ENCODE measurements at regions of chr16 and their contacts with region 1.

Region 1: GRCh38 chr16:4550591-4550990 is 5.5 kb upstream of the C16orf96 start:
- DNase-seq: no peak
- ATAC-seq: no peak
- H3K4me3 Mint-ChIP-seq: no peak overlapping the region
- H3K27ac Mint-ChIP-seq: peak overlapping the region; percentile 92; the same call in 1 of the 2 replicates
- H3K4me1 Mint-ChIP-seq: no peaks in the 10 kb centered on the region
- H3K27me3 Mint-ChIP-seq: peaks cover 10% of the 10 kb centered on the region; the same call in 1 of the 2 replicates
- CTCF ChIP-seq: no peak

Region 2: GRCh38 chr16:4529085-4530060 is 21.2 kb before region 1 on chr16:
- CTCF ChIA-PET with region 1: interaction called, 10 read pairs
- POLR2A ChIA-PET with region 1: no interaction called
- DNase-seq: peak; percentile 71
- ATAC-seq: peak; percentile 70
- H3K4me3 Mint-ChIP-seq: peak overlapping the region; percentile 40
- H3K27ac Mint-ChIP-seq: peak overlapping the region; percentile 98
- H3K4me1 Mint-ChIP-seq: peaks cover 33% of the 10 kb centered on the region
- H3K27me3 Mint-ChIP-seq: no peaks in the 10 kb centered on the region
- CTCF ChIP-seq: no peak

Region 3: DNA sequence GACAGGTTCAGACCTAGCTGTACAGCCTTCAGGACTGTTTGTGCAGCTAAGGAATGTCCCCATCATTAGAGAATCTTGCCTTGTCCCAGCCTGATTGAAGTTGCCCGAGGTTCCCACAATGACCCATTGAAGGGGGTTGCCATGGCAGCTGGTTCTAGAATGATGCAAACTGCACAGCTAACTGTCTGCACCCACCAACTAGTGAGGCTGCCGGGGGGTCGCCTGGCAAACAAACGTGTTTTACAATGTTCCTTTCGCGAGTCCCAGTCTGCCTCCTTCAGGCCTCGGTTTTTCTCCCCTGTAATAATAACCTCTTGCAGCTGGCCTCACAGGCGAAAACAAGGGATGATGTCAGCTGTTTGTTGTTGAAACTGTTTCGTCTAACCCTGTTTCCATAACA is 11.0 kb after region 1 on chr16:
- CTCF ChIA-PET with region 1: interaction called, 20 read pairs
- POLR2A ChIA-PET with region 1: no interaction called
- DNase-seq: no peak
- ATAC-seq: no peak
- H3K4me3 Mint-ChIP-seq: no peak overlapping the region
- H3K27ac Mint-ChIP-seq: no peak overlapping the region
- H3K4me1 Mint-ChIP-seq: no peaks in the 10 kb centered on the region
- H3K27me3 Mint-ChIP-seq: peaks cover 5% of the 10 kb centered on the region; the same call in 1 of the 2 replicates
- CTCF ChIP-seq: no peak

Region 4: GRCh38 chr16:4593069-4593468 is 42.5 kb after region 1 on chr16:
- CTCF ChIA-PET with region 1: interaction called, 14 read pairs
- POLR2A ChIA-PET with region 1: no interaction called
- DNase-seq: peak; percentile 58
- ATAC-seq: peak; percentile 64
- H3K4me3 Mint-ChIP-seq: no peak overlapping the region
- H3K27ac Mint-ChIP-seq: peak overlapping the region; percentile 68; the same call in 1 of the 2 replicates
- H3K4me1 Mint-ChIP-seq: peaks cover 19% of the 10 kb centered on the region
- H3K27me3 Mint-ChIP-seq: peaks cover 1% of the 10 kb centered on the region; the same call in 1 of the 2 replicates
- CTCF ChIP-seq: no peak

Region 5: GRCh38 chr16:4624015-4624826 is 73.6 kb after region 1 on chr16 and contains the start of gene MGRN1:
- CTCF ChIA-PET with region 1: interaction called, 10 read pairs
- POLR2A ChIA-PET with region 1: no interaction called
- DNase-seq: peak; percentile 94
- ATAC-seq: peak; percentile 93
- H3K4me3 Mint-ChIP-seq: peak within 1 kb of the TSS; percentile 97
- H3K27ac Mint-ChIP-seq: peak within 1 kb of the TSS; percentile 97
- H3K4me1 Mint-ChIP-seq: peaks cover 17% of the 10 kb centered on the region
- H3K27me3 Mint-ChIP-seq: no peaks in the 10 kb centered on the region
- CTCF ChIP-seq: peak; percentile 84
- total RNA-seq, gene MGRN1: 79.4 to 88.8 TPM (median 80.7 TPM) in 3 replicates